ENCODE measurements at regions of chr4 and their contacts with region 1.

Region 1: DNA sequence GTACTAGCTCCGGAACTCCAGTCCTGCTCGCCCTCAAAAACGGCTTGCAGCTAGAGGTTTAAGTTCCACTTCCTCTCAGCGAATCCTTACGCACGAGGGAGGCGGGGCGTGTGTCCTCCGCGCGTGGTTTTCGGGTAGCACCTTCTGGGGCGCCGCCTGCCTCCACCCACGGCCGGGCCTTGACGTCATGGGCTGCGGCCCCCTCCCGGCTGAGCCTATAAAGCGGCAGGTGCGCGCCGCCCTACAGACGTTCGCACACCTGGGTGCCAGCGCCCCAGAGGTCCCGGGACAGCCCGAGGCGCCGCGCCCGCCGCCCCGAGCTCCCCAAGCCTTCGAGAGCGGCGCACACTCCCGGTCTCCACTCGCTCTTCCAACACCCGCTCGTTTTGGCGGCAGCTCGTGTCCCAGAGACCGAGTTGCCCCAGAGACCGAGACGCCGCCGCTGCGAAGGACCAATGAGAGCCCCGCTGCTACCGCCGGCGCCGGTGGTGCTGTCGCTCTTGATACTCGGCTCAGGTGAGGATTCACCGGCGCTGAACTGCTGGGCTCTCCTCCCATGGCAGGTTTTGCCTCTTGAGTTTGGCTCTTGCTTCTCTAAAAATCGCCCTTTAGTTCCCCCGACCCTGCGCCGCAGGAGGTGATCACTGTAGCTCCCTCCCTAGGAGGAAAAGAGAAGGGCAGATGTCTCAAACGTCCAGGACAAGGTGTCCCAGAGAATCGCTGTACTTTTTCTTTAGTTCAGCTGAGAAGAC is at the start of gene AREG:
- DNase-seq: peak; percentile 90
- H3K4me3 Mint-ChIP-seq: peak within 1 kb of the TSS; percentile 95
- H3K27ac Mint-ChIP-seq: peak within 1 kb of the TSS; percentile 37
- H3K4me1 Mint-ChIP-seq: peaks cover 21% of the 10 kb centered on the region
- H3K27me3 Mint-ChIP-seq: no peaks in the 10 kb centered on the region
- CTCF ChIP-seq: peak; percentile 44
- total RNA-seq, gene AREG: 1,402 and 1,878 TPM in 2 replicates

Region 2: DNA sequence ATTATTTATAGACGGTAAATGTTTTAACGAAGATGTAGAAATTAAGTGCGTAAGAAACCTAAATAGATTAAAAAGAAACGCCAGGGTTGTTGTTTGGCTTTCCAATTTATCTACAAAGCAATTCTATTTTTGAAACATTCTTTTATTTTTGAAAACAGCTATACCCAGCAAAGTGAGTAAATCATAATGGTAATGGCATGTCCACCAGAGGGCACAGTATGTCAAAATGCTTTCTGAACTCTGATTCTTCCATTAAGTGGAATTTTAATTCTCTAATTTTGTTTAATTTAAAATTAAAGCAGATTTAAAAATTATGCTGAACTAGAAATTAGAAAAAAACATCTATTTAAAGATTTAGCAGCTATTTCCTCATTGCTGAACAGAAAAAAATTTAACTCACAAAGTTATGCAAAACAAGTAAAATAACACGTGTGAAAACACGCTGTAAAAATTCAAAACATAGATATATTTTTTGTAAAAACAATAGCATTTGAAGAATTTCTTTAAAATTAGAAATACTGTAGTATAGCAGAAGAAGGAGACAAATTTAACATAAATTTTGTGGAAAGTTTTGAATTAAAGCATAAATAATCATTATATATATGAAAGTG is 851.3 kb before region 1 on chr4:
- CTCF ChIA-PET with region 1: no interaction called
- POLR2A ChIA-PET with region 1: no interaction called
- intact Hi-C with region 1: no loop called
- DNase-seq: peak; percentile 51
- H3K4me3 Mint-ChIP-seq: no peak overlapping the region
- H3K27ac Mint-ChIP-seq: no peak overlapping the region
- H3K4me1 Mint-ChIP-seq: peaks cover 18% of the 10 kb centered on the region
- H3K27me3 Mint-ChIP-seq: no peaks in the 10 kb centered on the region
- CTCF ChIP-seq: peak; percentile 38

Region 3: GRCh38 chr4:74320559-74321118 is 124.4 kb before region 1 on chr4:
- CTCF ChIA-PET with region 1: interaction called, 4 read pairs
- POLR2A ChIA-PET with region 1: interaction called, 30 read pairs
- intact Hi-C with region 1: loop called (anchors 1 kb)
- DNase-seq: peak; percentile 90
- H3K4me3 Mint-ChIP-seq: no peak overlapping the region
- H3K27ac Mint-ChIP-seq: no peak overlapping the region
- H3K4me1 Mint-ChIP-seq: peaks cover 36% of the 10 kb centered on the region
- H3K27me3 Mint-ChIP-seq: no peaks in the 10 kb centered on the region
- CTCF ChIP-seq: peak; percentile 67

Region 4: DNA sequence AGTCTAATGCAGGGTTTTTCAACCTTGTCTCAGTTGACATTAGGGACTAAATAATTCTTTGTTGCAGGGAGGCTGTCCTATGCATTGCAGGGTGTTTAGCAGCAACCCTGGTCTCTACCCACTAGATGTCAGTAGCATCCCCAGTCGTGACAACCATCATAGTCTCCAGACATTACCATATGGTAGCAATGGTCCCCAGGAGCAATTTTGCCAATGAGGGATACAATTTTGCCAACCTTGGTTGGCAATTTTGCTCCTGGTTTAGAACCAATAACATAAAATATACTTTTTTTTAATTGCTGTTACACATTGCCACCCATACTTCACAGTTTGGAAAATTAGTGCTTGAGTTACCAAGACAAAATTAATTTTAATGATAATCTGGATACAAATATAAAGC is 74.2 kb before region 1 on chr4:
- CTCF ChIA-PET with region 1: interaction called, 55 read pairs
- POLR2A ChIA-PET with region 1: interaction called, 188 read pairs
- intact Hi-C with region 1: no loop called
- DNase-seq: peak; percentile 84
- H3K4me3 Mint-ChIP-seq: no peak overlapping the region
- H3K27ac Mint-ChIP-seq: no peak overlapping the region
- H3K4me1 Mint-ChIP-seq: peaks cover 35% of the 10 kb centered on the region
- H3K27me3 Mint-ChIP-seq: no peaks in the 10 kb centered on the region
- CTCF ChIP-seq: peak; percentile 83

Region 5: GRCh38 chr4:74385386-74385785 is 59.7 kb before region 1 on chr4:
- CTCF ChIA-PET with region 1: interaction called, 5 read pairs
- POLR2A ChIA-PET with region 1: interaction called, 188 read pairs
- intact Hi-C with region 1: no loop called
- DNase-seq: no peak
- H3K4me3 Mint-ChIP-seq: no peak overlapping the region
- H3K27ac Mint-ChIP-seq: no peak overlapping the region
- H3K4me1 Mint-ChIP-seq: no peaks in the 10 kb centered on the region
- H3K27me3 Mint-ChIP-seq: no peaks in the 10 kb centered on the region
- CTCF ChIP-seq: no peak

Region 6: DNA sequence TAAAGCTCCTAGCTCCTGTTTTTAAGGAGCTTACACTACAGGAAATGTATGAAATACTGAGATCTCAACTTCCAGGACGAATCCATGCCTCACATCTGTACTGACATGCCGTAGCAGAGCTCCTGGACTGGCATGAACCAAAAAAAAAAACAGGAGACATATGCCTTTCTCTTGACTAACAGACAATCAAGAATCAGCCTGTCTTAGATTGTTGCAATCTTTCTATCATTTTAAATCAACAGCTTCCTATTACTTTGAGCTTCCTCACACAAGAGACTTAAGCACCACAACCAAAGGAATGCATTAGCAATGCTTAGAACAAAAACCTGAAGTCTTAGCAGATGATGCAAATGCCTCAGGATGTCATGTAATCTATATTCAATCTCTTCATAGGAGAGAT is 34.8 kb before region 1 on chr4:
- CTCF ChIA-PET with region 1: interaction called, 6 read pairs
- POLR2A ChIA-PET with region 1: interaction called, 217 read pairs
- intact Hi-C with region 1: loop called (anchors 1 kb)
- DNase-seq: peak; percentile 70
- H3K4me3 Mint-ChIP-seq: peak overlapping the region; percentile 55
- H3K27ac Mint-ChIP-seq: peak overlapping the region; percentile 97
- H3K4me1 Mint-ChIP-seq: peaks cover 42% of the 10 kb centered on the region
- H3K27me3 Mint-ChIP-seq: no peaks in the 10 kb centered on the region
- CTCF ChIP-seq: no peak

Region 7: DNA sequence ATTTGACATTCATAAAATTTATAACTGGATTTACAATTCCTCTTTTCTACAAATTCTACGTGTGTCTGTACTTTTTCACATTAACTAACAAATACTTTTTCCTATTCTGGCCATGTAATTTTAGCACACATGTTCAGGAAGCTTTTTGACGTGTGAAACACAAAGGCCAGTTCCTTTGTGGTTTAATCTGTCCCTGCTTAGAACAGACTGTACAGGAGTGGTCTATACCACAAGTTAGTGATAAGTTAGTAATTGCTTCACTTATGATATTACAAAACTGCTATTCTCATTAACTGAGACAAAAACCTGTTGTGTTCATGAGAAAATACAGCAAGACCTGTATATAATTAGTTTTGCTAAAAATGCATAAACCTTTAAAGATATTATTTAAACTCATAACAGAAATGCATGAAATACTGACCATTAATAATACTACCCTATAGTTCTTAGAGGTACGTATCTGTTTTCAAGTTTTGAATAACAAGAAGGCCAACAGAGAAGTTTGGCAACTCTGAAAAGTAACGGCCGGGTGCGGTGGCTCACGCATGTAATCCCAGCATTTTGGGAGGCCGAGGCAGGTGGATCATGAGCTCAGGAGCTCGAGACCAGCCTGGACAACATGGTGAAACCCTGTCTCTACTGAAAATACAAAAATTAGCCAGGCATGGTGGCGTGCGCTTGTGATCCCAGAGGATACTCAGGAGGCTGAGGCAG is 13.8 kb before region 1 on chr4:
- CTCF ChIA-PET with region 1: interaction called, 25 read pairs
- POLR2A ChIA-PET with region 1: interaction called, 186 read pairs
- intact Hi-C with region 1: loop called (anchors 1 kb)
- DNase-seq: peak; percentile 86
- H3K4me3 Mint-ChIP-seq: peak overlapping the region; percentile 45
- H3K27ac Mint-ChIP-seq: peak overlapping the region; percentile 87
- H3K4me1 Mint-ChIP-seq: peaks cover 35% of the 10 kb centered on the region
- H3K27me3 Mint-ChIP-seq: no peaks in the 10 kb centered on the region
- CTCF ChIP-seq: no peak

Region 8: DNA sequence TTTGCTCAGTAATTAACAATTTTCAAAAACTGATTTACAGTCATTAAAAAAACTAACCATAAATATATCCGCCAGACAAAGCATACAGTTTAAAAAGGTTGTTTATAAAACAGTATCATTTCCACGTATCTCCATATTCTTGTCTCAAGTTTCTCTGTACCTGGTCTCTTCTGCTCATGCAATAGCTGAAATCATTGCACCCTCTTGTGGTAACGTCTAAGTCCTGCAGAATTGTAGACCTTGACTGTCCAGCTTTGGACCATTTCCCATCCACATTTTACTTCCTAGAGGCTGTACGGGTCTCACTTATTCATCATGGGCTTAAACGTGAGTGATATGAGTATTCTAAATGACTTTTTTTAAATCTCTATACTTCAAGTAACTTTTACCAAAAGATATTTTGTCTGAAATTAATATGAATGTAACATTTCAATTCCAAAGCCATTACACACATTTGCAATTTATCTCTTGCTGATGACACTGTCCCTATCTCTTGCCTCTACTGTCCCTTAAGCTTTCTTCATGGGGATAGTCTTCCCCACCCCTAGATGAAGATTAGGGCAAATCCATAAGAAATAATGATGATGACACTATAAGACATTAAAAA is 230.7 kb after region 1 on chr4:
- CTCF ChIA-PET with region 1: interaction called, 4 read pairs
- POLR2A ChIA-PET with region 1: interaction called, 5 read pairs
- intact Hi-C with region 1: loop called (anchors 1 kb)
- DNase-seq: peak; percentile 80
- H3K4me3 Mint-ChIP-seq: peak overlapping the region; percentile 19
- H3K27ac Mint-ChIP-seq: no peak overlapping the region
- H3K4me1 Mint-ChIP-seq: peaks cover 9% of the 10 kb centered on the region
- H3K27me3 Mint-ChIP-seq: no peaks in the 10 kb centered on the region
- CTCF ChIP-seq: peak; percentile 80

Region 9: DNA sequence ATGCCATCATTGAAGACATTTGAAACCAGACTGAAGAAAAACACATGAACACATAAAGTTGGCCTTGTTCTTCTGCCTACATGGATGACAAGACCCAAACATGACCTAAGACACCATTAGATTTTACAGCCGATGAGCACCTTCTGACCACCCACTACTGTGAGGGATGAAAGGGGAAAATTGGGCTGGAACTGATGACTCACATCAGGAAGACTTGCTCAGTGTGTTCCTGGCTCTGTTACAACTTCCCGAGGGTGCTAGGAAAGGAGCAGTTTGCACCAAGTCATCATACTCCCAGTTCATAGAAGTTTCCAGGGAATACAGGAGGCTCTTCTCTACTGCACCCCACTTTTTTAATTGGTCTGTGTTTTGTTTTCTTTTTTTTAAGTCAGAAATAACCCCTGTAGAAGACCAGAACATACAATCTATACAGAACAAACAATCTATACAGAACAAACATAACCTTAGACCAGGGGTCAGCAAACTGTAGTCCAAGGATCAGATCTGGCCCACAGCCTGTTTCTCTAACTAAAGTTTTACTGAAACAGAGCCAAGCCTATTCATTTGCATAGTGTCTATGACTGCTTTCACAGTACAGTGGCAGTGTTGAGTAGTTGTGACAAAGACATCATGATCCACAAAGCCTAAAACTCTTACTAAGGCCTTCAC is 323.9 kb after region 1 on chr4:
- CTCF ChIA-PET with region 1: no interaction called
- POLR2A ChIA-PET with region 1: no interaction called
- intact Hi-C with region 1: no loop called
- DNase-seq: peak; percentile 86
- H3K4me3 Mint-ChIP-seq: no peak overlapping the region
- H3K27ac Mint-ChIP-seq: no peak overlapping the region
- H3K4me1 Mint-ChIP-seq: peaks cover 7% of the 10 kb centered on the region
- H3K27me3 Mint-ChIP-seq: no peaks in the 10 kb centered on the region
- CTCF ChIP-seq: no peak